Left cardiac atrium (tissue), 4 donors: ENCODE measurements at regions of chr1 and their contacts with region 1.

Region 1: GRCh38 chr1:55215256-55216021 is at the start of gene USP24:
- DNase-seq: peak; percentile 83
- ATAC-seq: peak; percentile 93 to 96
- total RNA-seq, gene USP24: 31.8 to 33.6 TPM

Region 2: GRCh38 chr1:55155514-55155913 is 59.9 kb before region 1 on chr1:
- intact Hi-C with region 1: loop called (anchors 10 kb)
- DNase-seq: peak; percentile 53
- ATAC-seq: peak; percentile 77 to 83

Region 3: DNA sequence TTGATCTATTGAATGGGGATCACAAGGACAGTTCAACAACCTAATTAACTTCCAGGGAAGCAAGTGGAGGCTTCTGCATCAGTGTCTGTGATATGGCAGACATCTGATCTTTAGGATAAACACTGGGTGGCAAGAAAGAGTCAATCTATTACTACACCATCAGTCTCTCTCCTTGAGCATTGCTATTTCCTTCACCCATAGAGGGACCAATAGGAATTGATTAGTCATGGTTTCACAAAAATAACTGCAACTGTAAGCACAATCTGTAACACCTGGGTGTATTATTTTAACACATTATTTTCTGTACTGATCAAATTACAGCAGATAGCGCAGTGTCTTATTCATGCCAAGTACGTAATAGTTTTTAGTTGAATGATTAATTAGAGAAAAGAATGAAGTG is 50.5 kb before region 1 on chr1:
- intact Hi-C with region 1: loop called in 1 of 2 experiments (anchors 10 kb)
- DNase-seq: no peak
- ATAC-seq: no peak

Region 4: DNA sequence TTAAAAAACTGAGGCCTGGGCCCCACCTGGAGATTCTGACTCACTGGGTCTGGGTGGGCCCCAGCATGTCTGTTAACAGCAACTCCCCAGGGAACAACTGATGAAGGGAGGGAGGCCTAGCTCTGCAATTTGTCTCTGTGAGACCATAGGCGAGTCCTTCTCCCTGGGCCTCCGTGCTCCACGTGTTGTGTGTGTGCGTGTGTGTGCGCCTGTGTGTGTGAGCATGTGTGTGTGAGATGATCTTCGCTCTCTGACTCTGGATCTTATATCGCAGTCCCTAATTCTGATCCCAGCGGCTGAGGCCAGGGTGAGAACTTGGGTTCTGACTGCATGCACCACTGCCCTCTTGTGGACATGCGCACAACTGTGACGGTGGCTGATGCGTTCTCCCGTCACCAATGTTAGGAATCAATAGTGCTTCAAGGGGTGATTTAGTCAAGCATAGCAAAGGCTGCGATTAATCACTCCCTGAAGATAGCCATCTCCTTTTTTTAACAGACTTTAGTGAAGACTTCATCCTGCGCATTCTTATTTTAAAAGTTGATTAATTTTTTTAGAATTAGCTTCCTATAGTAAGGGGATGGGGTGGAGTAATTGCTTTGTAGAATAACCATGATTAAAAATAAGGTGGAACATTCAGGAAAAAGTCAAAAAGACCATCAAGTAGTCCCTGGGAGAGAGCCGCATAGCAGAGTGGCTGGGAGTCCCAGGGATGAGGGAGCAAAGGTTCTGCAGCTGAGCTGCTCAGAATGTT is 62.1 kb after region 1 on chr1:
- intact Hi-C with region 1: loop called in 1 of 2 experiments (anchors 5 kb)
- DNase-seq: peak; percentile 88
- ATAC-seq: peak; percentile 91 to 92